CD8-positive, alpha-beta T cell (primary cell): ENCODE measurements at regions of chr14 and their contacts with region 1.

Region 1: DNA sequence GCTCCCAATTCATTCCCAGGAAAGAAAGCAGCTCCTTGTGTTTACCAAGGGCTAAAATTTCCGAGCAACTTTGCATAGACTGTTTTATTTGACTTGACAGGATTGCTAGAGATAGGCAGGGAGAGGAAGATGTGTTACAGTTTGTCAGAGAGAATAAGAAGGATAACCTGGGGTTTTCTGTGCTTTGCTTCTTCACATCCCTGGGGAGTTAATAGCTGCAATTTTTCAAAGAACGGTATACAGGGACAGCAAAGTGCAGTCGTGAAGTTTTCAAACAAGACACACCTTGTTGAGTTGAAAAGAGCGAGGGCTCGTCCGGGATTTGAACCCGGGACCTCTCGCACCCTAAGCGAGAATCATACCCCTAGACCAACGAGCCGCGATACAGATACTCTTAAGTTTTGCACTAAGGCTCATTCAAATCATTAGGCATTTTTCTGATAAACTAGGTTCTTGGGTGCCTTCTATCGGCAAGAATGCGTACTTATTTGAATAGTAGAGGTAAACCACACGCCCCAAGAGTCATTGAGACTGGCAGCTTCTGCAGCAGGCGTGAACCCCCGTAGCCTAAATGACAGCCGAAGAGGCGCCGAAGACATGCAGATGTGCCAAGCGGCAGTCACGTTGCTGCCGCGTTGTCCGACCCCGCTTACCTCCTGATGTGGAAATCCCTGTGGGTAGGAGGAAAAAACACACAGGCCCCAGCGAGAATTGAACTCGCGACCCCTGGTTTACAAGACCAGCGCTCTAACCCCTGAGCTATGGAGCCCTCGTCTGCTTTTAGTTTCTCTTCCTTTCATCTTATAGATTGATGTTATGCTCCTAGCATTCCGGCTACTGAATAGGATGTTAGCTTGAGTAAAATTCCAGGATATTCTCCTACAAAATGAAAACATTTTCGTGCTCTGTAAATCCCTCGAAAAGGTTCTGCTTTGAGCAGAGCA is 22.2 kb upstream of the RNASE12 start:
- DNase-seq: peak; percentile 66 to 95 (median 80)
- ATAC-seq: peak; percentile 84
- H3K4me3 ChIP-seq: peak overlapping the region; percentile 57
- H3K4me3 Mint-ChIP-seq: no peak overlapping the region
- H3K27ac ChIP-seq: peak overlapping the region in 1 of 2 experiments; percentile 42
- H3K27ac Mint-ChIP-seq: no peak overlapping the region
- H3K4me1 ChIP-seq: peaks cover 20% of the 10 kb centered on the region
- H3K4me1 Mint-ChIP-seq: peaks cover 7% of the 10 kb centered on the region
- H3K27me3 ChIP-seq: no peaks in the 10 kb centered on the region
- H3K27me3 Mint-ChIP-seq: peaks cover 2% of the 10 kb centered on the region
- CTCF ChIP-seq: peak; percentile 60

Region 2: DNA sequence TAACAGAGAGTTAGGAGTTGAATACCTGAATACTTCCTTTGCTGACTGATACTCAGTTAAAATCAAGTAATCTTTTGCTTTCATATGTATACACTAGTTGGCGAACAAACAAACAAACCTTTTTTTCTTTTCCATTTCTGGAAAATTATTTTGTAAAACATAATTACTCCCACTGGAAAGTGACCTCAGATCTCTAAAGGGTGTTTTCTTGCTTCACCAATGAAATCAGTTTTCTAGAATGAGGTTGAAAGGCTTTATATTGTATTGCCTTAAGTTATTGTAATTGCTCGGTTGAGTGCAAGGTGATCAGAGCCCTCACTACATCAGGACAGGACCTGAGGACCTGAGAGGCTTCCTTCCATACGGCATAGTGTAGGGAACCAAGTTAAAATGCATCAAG is 682.7 kb before region 1 on chr14 and contains the start of gene OR4K1:
- CTCF ChIA-PET with region 1: no interaction called
- POLR2A ChIA-PET with region 1: no interaction called
- intact Hi-C with region 1: no loop called
- DNase-seq: no peak
- ATAC-seq: no peak
- H3K4me3 ChIP-seq: no peak within 1 kb of the TSS
- H3K4me3 Mint-ChIP-seq: no peak within 1 kb of the TSS
- H3K27ac ChIP-seq: no peak within 1 kb of the TSS
- H3K27ac Mint-ChIP-seq: no peak within 1 kb of the TSS
- H3K4me1 ChIP-seq: no peaks in the 10 kb centered on the region
- H3K4me1 Mint-ChIP-seq: no peaks in the 10 kb centered on the region
- H3K27me3 ChIP-seq: no peaks in the 10 kb centered on the region
- H3K27me3 Mint-ChIP-seq: no peaks in the 10 kb centered on the region
- CTCF ChIP-seq: no peak
- total RNA-seq, gene OR4K1: not detected

Region 3: GRCh38 chr14:20305265-20306078 is 307.9 kb before region 1 on chr14 and contains the start of gene TTC5:
- CTCF ChIA-PET with region 1: no interaction called
- POLR2A ChIA-PET with region 1: no interaction called
- intact Hi-C with region 1: loop called in 1 of 2 experiments (anchors 5 kb)
- DNase-seq: peak; percentile 87 to 95 (median 90)
- ATAC-seq: peak; percentile 99
- H3K4me3 ChIP-seq: peak within 1 kb of the TSS; percentile 62 to 77
- H3K4me3 Mint-ChIP-seq: peak within 1 kb of the TSS; percentile 91
- H3K27ac ChIP-seq: peak within 1 kb of the TSS; percentile 48 to 59
- H3K27ac Mint-ChIP-seq: peak within 1 kb of the TSS; percentile 90
- H3K4me1 ChIP-seq: peaks cover 16% of the 10 kb centered on the region
- H3K4me1 Mint-ChIP-seq: peaks cover 32% of the 10 kb centered on the region
- H3K27me3 ChIP-seq: no peaks in the 10 kb centered on the region
- H3K27me3 Mint-ChIP-seq: no peaks in the 10 kb centered on the region
- CTCF ChIP-seq: peak; percentile 93
- total RNA-seq, gene TTC5: 9.2 to 9.9 TPM

Region 4: GRCh38 chr14:20343092-20343861 is 270.1 kb before region 1 on chr14 and contains the start of gene PARP2:
- CTCF ChIA-PET with region 1: interaction called, 10 read pairs
- POLR2A ChIA-PET with region 1: interaction called, 11 read pairs
- intact Hi-C with region 1: loop called (anchors 1 kb)
- DNase-seq: peak; percentile 70 to 97 (median 84)
- ATAC-seq: peak; percentile 81
- H3K4me3 ChIP-seq: peak within 1 kb of the TSS; percentile 96 to 98
- H3K4me3 Mint-ChIP-seq: peak within 1 kb of the TSS; percentile 100
- H3K27ac ChIP-seq: peak within 1 kb of the TSS; percentile 79 to 93
- H3K27ac Mint-ChIP-seq: peak within 1 kb of the TSS; percentile 97
- H3K4me1 ChIP-seq: peaks cover 8% of the 10 kb centered on the region
- H3K4me1 Mint-ChIP-seq: peaks cover 18% of the 10 kb centered on the region
- H3K27me3 ChIP-seq: peaks cover 0 to 3% of the 10 kb centered on the region in 2 experiments
- H3K27me3 Mint-ChIP-seq: no peaks in the 10 kb centered on the region
- CTCF ChIP-seq: peak; percentile 14
- total RNA-seq, gene PARP2: 15.9 to 16.5 TPM

Region 5: GRCh38 chr14:20461274-20462001 is 151.9 kb before region 1 on chr14 and contains the start of gene PIP4P1:
- CTCF ChIA-PET with region 1: interaction called, 7 read pairs
- POLR2A ChIA-PET with region 1: interaction called, 6 read pairs
- intact Hi-C with region 1: loop called in 1 of 2 experiments (anchors 2 kb)
- DNase-seq: peak; percentile 95 to 100 (median 97)
- ATAC-seq: peak; percentile 85
- H3K4me3 ChIP-seq: peak within 1 kb of the TSS; percentile 72 to 85
- H3K4me3 Mint-ChIP-seq: peak within 1 kb of the TSS; percentile 92
- H3K27ac ChIP-seq: peak within 1 kb of the TSS; percentile 84 to 95
- H3K27ac Mint-ChIP-seq: peak within 1 kb of the TSS; percentile 96
- H3K4me1 ChIP-seq: peaks cover 26% of the 10 kb centered on the region
- H3K4me1 Mint-ChIP-seq: peaks cover 30% of the 10 kb centered on the region
- H3K27me3 ChIP-seq: no peaks in the 10 kb centered on the region
- H3K27me3 Mint-ChIP-seq: no peaks in the 10 kb centered on the region
- CTCF ChIP-seq: no peak
- total RNA-seq, gene PIP4P1: 87.7 to 105 TPM

Region 6: DNA sequence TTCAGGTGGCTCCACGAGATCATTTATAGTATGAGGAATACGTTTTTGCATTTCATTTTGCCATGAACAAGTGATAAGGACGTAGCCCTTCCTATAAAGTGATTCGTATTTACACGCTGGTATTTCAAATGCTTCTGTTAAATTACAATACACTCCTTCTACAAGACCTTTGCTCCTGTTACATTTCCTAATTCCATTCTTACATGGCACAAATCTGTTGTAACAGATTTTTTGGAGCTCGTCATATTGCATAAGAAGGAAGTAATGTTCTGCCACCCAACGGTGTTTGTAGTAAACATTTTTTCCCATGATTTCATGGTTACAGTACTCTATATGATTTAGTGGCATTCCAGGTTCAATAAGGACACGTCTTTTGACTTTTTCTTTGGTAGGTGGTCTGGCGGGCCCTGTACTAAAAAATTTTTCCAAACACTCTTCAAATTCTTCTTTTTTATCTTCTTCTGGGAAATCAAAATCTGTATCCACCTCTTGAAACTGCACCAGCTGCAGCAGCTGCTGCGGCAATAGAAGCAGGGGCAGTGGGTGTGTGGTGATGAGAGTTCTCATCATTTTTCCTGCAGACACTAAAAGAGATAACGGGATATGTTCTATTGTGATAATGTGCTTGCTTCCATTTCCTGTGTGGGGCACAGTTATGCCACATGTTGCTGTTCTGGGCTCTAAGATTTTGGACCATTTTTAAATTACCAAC is 56.7 kb before region 1 on chr14:
- CTCF ChIA-PET with region 1: no interaction called
- POLR2A ChIA-PET with region 1: no interaction called
- intact Hi-C with region 1: no loop called
- DNase-seq: no peak
- ATAC-seq: no peak
- H3K4me3 ChIP-seq: no peak overlapping the region
- H3K4me3 Mint-ChIP-seq: no peak overlapping the region
- H3K27ac ChIP-seq: no peak overlapping the region
- H3K27ac Mint-ChIP-seq: no peak overlapping the region
- H3K4me1 ChIP-seq: no peaks in the 10 kb centered on the region
- H3K4me1 Mint-ChIP-seq: no peaks in the 10 kb centered on the region
- H3K27me3 ChIP-seq: peaks cover 0 to 2% of the 10 kb centered on the region in 2 experiments
- H3K27me3 Mint-ChIP-seq: peaks cover 3% of the 10 kb centered on the region
- CTCF ChIP-seq: no peak

Region 7: GRCh38 chr14:20632682-20633428 is 19.5 kb after region 1 on chr14:
- CTCF ChIA-PET with region 1: interaction called, 18 read pairs
- POLR2A ChIA-PET with region 1: interaction called, 7 read pairs
- intact Hi-C with region 1: loop called (anchors 1 to 2 kb)
- DNase-seq: peak in 7 of 9 experiments; percentile 19 to 83 (median 55)
- ATAC-seq: peak; percentile 65
- H3K4me3 ChIP-seq: peak overlapping the region; percentile 55 to 65
- H3K4me3 Mint-ChIP-seq: peak overlapping the region; percentile 90
- H3K27ac ChIP-seq: peak overlapping the region in 1 of 2 experiments; percentile 43
- H3K27ac Mint-ChIP-seq: peak overlapping the region; percentile 84
- H3K4me1 ChIP-seq: peaks cover 18% of the 10 kb centered on the region
- H3K4me1 Mint-ChIP-seq: peaks cover 52% of the 10 kb centered on the region
- H3K27me3 ChIP-seq: no peaks in the 10 kb centered on the region
- H3K27me3 Mint-ChIP-seq: peaks cover 9% of the 10 kb centered on the region
- CTCF ChIP-seq: no peak

Region 8: DNA sequence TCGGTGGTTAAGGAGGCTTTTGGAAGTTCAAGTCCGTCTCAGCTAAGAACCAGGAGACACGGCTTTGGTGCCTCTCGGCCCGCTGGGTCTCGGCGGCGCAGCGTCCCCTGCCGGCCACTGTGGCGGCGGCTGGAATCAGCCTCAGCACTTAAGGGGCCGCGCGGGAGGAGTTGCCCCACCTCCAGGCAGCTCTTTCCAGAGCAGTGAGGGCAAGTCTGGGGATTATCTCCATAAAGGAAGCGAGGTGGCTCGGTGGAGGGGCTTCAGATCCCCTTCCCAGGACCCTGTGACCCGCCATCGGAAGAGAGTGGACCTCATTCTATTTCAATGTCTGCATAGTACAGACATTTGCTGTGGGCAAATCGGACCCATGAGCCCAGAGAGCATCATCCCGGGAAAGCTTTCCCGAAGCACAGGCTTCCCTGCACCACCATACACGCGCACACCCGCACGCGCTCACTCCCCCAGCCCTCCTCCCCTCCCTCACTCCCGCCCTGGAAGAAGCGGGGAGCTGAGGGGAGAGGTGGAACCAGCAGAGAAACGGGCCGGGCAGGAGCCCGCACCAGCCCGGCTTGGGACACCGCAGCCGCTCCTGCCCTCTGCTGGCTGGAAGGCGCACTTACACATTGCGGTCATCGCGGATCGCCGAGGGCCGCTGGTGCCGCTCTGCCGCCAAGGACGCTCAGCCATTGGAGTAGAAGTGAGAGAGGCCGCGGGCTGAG is 357.8 kb after region 1 on chr14:
- CTCF ChIA-PET with region 1: no interaction called
- POLR2A ChIA-PET with region 1: no interaction called
- intact Hi-C with region 1: loop called in 1 of 2 experiments (anchors 5 kb)
- DNase-seq: peak; percentile 48 to 87 (median 75)
- ATAC-seq: peak; percentile 91
- H3K4me3 ChIP-seq: peak overlapping the region; percentile 80 to 85
- H3K4me3 Mint-ChIP-seq: peak overlapping the region; percentile 92
- H3K27ac ChIP-seq: no peak overlapping the region
- H3K27ac Mint-ChIP-seq: no peak overlapping the region
- H3K4me1 ChIP-seq: peaks cover 11% of the 10 kb centered on the region
- H3K4me1 Mint-ChIP-seq: peaks cover 10% of the 10 kb centered on the region
- H3K27me3 ChIP-seq: peaks cover 0 to 3% of the 10 kb centered on the region in 2 experiments
- H3K27me3 Mint-ChIP-seq: peaks cover 24% of the 10 kb centered on the region
- CTCF ChIP-seq: peak; percentile 92